Colonic mucosa (tissue), 4 donors: ENCODE measurements at regions of chr2 and their contacts with region 1.

Region 1: GRCh38 chr2:43576981-43577892 is 18.6 kb downstream of the THADA start:
- DNase-seq: no peak
- H3K4me3 ChIP-seq: no peak overlapping the region
- H3K27ac ChIP-seq: no peak overlapping the region
- H3K4me1 ChIP-seq: no peaks in the 10 kb centered on the region
- H3K27me3 ChIP-seq: no peaks in the 10 kb centered on the region
- CTCF ChIP-seq: peak; percentile 62

Region 2: GRCh38 chr2:42828487-42829425 is 748.5 kb before region 1 on chr2:
- intact Hi-C with region 1: loop called (anchors 10 kb)
- DNase-seq: peak; percentile 75
- H3K4me3 ChIP-seq: no peak overlapping the region
- H3K27ac ChIP-seq: no peak overlapping the region
- H3K4me1 ChIP-seq: peaks cover 7% of the 10 kb centered on the region
- H3K27me3 ChIP-seq: no peaks in the 10 kb centered on the region
- CTCF ChIP-seq: peak; percentile 90